A549 (cell line): ENCODE measurements at regions of chr10 and their contacts with region 1.

Region 1: GRCh38 chr10:88932539-88933256 is 19.9 kb downstream of the ACTA2 start:
- DNase-seq: peak; percentile 54 to 76
- ATAC-seq: peak; percentile 83 to 89
- H3K4me3 ChIP-seq: no peak overlapping the region
- H3K27ac ChIP-seq: peak overlapping the region; percentile 12 to 24; a peak in 2 of 6 replicates
- H3K4me1 ChIP-seq: peaks cover 8% of the 10 kb centered on the region
- CTCF ChIP-seq: peak; percentile 92
- EP300 ChIP-seq: no peak
- POLR2A ChIP-seq: no peak
- RAD21 ChIP-seq: peak; percentile 87 to 88

Region 2: GRCh38 chr10:88657901-88658300 is 274.8 kb before region 1 on chr10:
- CTCF ChIA-PET with region 1: no interaction called
- POLR2A ChIA-PET with region 1: no interaction called
- DNase-seq: no peak
- ATAC-seq: no peak
- H3K4me3 ChIP-seq: no peak overlapping the region
- H3K27ac ChIP-seq: no peak overlapping the region
- H3K4me1 ChIP-seq: peaks cover 1% of the 10 kb centered on the region; the same call in 1 of the 3 replicates
- CTCF ChIP-seq: no peak
- EP300 ChIP-seq: no peak
- POLR2A ChIP-seq: no peak
- RAD21 ChIP-seq: no peak

Region 3: DNA sequence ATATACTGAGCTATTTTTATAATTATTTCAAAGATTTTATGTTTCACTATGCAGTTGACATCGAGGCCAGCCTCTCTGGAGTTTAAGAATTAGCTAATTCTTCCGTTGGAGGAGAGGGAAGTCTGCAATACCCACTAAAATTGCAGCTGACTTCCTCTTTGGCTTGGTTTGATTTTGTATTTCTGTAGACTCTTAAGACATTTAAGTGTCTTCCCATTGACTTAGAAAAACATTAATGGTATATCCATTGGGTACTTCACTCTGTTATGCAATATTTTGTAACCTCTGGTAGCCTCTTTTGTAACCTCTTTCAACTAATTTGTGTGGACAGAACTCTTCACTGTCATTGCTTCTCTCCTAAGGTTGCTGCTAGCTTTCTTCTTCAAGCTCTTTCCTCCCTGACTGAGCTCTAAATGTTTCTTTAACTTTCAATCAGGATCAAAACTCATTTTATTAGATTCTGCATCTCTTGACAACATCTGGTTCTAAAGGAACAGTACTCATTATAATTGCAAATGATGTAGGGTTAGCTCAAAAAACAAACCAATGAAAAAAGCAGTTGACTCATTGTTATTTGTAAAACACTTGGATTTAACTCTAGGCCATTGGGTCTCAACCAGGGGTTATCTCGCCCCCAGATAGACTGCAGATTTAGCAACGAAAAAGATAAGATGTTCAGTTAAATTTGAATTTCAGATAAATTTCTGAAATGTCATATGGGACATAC is 79.4 kb before region 1 on chr10:
- CTCF ChIA-PET with region 1: interaction called, 12 read pairs
- POLR2A ChIA-PET with region 1: no interaction called
- DNase-seq: no peak
- ATAC-seq: no peak
- H3K4me3 ChIP-seq: no peak overlapping the region
- H3K27ac ChIP-seq: no peak overlapping the region
- H3K4me1 ChIP-seq: peaks cover 33% of the 10 kb centered on the region
- CTCF ChIP-seq: no peak
- EP300 ChIP-seq: no peak
- POLR2A ChIP-seq: no peak
- RAD21 ChIP-seq: no peak

Region 4: GRCh38 chr10:88892222-88892967 is 40.3 kb before region 1 on chr10:
- CTCF ChIA-PET with region 1: interaction called, 13 read pairs
- POLR2A ChIA-PET with region 1: no interaction called
- DNase-seq: no peak
- ATAC-seq: no peak
- H3K4me3 ChIP-seq: no peak overlapping the region
- H3K27ac ChIP-seq: peak overlapping the region; percentile 40 to 80; a peak in 5 of 6 replicates
- H3K4me1 ChIP-seq: peaks cover 100% of the 10 kb centered on the region
- CTCF ChIP-seq: no peak
- EP300 ChIP-seq: no peak
- POLR2A ChIP-seq: no peak
- RAD21 ChIP-seq: no peak

Region 5: DNA sequence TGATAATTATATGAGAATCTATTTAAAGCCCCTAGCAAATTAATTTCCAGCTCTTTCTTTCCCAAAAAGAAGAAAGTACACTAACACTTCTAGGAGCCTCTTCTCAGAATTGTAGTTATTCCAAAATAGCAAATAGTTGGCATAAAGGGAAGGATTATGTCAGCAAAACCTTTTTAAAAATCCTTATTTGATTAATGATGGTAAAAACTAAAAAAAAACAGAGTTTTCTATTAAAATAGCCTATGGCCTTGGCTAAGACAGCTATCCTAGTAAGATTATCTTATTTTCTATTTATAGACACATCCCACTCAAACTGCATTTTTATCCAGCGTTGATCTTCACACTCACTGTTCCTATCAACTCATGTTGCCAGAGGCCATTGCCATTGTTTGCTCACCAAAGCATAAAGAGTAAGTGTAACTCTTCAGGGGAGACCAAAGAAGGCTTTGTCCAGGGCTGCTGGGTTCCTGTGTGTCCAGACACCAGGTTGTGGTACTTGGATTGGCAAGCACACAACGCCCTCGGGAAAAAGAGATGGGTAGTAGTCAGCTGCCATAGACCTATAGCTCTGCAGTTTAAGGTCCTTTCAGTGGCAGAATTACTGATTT is 11.6 kb before region 1 on chr10:
- CTCF ChIA-PET with region 1: interaction called, 35 read pairs
- POLR2A ChIA-PET with region 1: interaction called, 3 read pairs
- DNase-seq: no peak
- ATAC-seq: no peak
- H3K4me3 ChIP-seq: no peak overlapping the region
- H3K27ac ChIP-seq: no peak overlapping the region
- H3K4me1 ChIP-seq: no peaks in the 10 kb centered on the region
- CTCF ChIP-seq: no peak
- EP300 ChIP-seq: no peak
- POLR2A ChIP-seq: no peak
- RAD21 ChIP-seq: no peak

Region 6: GRCh38 chr10:88975377-88975720 is 42.7 kb after region 1 on chr10:
- CTCF ChIA-PET with region 1: interaction called, 11 read pairs
- POLR2A ChIA-PET with region 1: no interaction called
- DNase-seq: no peak
- ATAC-seq: peak; percentile 35 to 70; a peak in 4 of 6 replicates
- H3K4me3 ChIP-seq: peak overlapping the region; percentile 44
- H3K27ac ChIP-seq: peak overlapping the region; percentile 65 to 80
- H3K4me1 ChIP-seq: peaks cover 12% of the 10 kb centered on the region
- CTCF ChIP-seq: no peak
- EP300 ChIP-seq: no peak
- POLR2A ChIP-seq: no peak
- RAD21 ChIP-seq: no peak

Region 7: GRCh38 chr10:89029785-89030437 is 97.2 kb after region 1 on chr10:
- CTCF ChIA-PET with region 1: interaction called, 13 read pairs
- POLR2A ChIA-PET with region 1: no interaction called
- DNase-seq: peak; percentile 35 to 75
- ATAC-seq: peak; percentile 70 to 85
- H3K4me3 ChIP-seq: no peak overlapping the region
- H3K27ac ChIP-seq: no peak overlapping the region
- H3K4me1 ChIP-seq: peaks cover 23% of the 10 kb centered on the region
- CTCF ChIP-seq: peak; percentile 89
- EP300 ChIP-seq: no peak
- POLR2A ChIP-seq: no peak
- RAD21 ChIP-seq: peak; percentile 91

Region 8: DNA sequence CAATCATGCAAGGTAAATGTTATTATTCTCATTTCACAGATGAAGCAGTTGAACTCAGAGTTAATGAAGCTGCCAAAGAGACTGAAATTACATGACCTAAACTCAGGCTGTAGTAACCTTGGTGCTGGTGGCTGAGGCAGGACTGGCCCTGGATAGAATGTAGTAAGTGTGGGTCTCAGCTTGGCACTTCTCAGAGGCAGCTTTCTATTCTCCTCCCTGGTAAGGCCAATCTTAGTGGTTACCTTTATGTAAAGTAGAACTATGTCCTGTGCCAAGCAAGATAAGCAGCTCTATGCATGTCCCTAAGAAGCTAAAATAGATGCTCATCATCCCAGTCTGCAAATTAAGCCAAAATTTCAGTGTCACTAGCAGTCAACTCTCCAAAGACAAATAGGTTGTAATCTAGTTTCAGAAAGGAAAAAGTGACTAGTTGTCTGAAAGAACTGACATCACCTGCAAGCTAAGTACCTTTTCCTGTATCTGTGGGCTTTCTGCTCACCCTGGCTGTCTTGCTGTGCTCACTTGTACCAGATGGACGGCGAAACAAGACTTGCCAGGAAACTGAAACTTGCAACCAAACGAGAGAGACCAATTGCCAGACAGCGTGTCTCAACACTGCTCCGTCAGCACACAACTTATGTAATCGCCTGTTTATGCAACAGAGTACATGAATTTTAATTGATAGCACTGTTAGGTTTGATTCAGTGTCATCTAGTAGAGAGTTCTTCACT is 230.7 kb after region 1 on chr10:
- CTCF ChIA-PET with region 1: no interaction called
- POLR2A ChIA-PET with region 1: no interaction called
- DNase-seq: no peak
- ATAC-seq: no peak
- H3K4me3 ChIP-seq: no peak overlapping the region
- H3K27ac ChIP-seq: no peak overlapping the region
- H3K4me1 ChIP-seq: no peaks in the 10 kb centered on the region
- CTCF ChIP-seq: no peak
- EP300 ChIP-seq: no peak
- POLR2A ChIP-seq: no peak
- RAD21 ChIP-seq: no peak

Region 9: DNA sequence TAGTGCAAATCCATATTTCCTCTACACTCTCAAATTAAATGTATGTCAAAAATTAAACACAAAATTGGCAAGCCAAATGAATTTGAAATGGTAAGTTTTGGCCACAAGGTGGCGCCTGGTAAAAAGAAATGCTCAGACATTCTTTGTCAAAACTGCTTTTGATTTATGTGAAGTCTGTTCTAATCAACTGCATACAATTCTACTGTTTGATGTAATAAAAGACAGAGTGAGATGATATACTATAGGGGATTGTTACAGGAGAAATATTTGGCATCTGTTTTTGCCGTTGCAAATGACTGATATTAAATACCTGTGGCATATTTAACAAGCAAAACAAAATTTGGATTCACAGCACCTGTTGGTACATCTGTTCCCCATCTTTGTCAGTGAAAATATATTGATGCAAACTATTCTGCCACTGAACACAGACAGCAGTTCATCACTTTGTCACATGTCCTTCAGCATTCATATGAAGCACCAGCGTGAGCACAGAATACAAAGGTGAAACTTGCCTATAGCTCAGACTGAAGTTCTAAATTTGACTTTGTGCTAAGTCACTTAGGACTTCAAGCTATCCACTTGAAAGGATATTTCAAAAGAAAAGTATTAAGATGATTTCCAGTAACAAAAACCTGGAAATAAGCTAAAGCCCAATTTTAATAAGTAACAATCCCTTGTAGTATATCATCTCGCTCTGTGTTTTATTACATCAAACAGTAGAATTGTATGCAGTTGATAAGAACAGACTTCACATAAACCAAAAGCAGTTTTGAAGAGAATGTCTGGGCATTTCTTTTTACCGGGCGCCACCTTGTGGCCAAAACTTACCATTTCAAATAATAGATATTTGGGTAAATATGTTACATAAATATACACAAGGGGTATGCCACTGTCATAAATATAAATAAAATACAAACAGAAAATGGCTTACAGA is 284.6 kb after region 1 on chr10:
- CTCF ChIA-PET with region 1: interaction called, 33 read pairs
- POLR2A ChIA-PET with region 1: no interaction called
- DNase-seq: peak; percentile 24 to 58
- ATAC-seq: peak; percentile 69 to 74; a peak in 4 of 6 replicates
- H3K4me3 ChIP-seq: no peak overlapping the region
- H3K27ac ChIP-seq: no peak overlapping the region
- H3K4me1 ChIP-seq: peaks cover 6% of the 10 kb centered on the region; the same call in 2 of the 3 replicates
- CTCF ChIP-seq: peak; percentile 84
- EP300 ChIP-seq: no peak
- POLR2A ChIP-seq: no peak
- RAD21 ChIP-seq: peak; percentile 69 to 70